ENCODE measurements at regions of chr18 and their contacts with region 1.

Region 1: GRCh38 chr18:3447895-3448837 is 1.8 kb upstream of the TGIF1 start:
- DNase-seq: peak; percentile 96
- ATAC-seq: peak; percentile 76
- H3K4me3 ChIP-seq: peak overlapping the region; percentile 85
- H3K27ac ChIP-seq: peak overlapping the region; percentile 91
- H3K4me1 ChIP-seq: peaks cover 2% of the 10 kb centered on the region
- H3K27me3 ChIP-seq: no peaks in the 10 kb centered on the region
- CTCF ChIP-seq: peak; percentile 24; the same call in 1 of the 2 replicates
- POLR2A ChIP-seq: peak; percentile 95
- RAD21 ChIP-seq: peak; percentile 35; the same call in 1 of the 2 replicates

Region 2: DNA sequence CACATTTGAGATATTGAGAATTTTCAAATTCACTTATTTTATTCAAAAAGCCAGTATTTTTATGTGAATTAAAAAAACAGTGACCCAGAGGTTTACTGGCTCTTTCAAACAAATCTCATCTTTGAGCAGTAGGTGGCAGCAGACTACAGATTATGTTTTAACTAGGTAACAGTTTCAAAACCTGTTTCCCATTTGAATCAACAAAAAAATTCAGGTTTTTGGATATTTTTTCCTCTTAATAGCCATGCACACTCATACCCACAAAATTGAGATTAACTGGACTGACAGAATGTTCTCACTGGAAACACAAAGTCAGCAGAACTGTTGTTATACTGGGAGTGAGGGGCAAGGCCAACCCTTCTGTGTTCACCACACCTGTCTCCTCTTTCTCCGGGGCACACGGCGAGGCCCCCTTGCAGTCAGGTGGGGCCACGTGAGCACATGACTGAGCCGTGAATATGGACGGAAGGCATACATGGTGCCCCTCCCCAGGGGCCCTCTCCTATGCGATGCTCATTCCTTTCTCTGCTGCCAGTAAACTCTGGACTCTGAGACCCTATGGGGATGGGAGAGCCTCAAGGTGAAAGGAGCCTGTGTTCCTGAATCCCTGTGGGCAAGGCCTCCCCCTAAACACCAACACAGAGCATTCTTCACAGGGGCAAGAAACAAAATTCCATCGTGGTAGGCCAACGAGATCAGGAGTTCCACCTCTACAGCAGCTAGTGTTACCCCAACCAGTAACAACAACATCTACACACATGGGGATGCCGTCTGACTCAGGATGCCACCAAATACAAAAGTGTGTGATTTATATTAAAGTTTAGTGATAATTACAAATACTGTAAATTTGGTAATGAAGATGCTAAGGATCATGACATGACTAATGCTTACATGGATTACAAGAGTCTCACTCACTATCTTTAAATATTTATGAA is 515.7 kb before region 1 on chr18:
- CTCF ChIA-PET with region 1: no interaction called
- POLR2A ChIA-PET with region 1: no interaction called
- dilution Hi-C with region 1: no loop called
- in situ Hi-C with region 1: no loop called
- intact Hi-C with region 1: loop called (anchors 10 kb)
- DNase-seq: peak; percentile 70
- ATAC-seq: peak; percentile 56
- H3K4me3 ChIP-seq: no peak overlapping the region
- H3K27ac ChIP-seq: peak overlapping the region; percentile 39; the same call in 1 of the 2 replicates
- H3K4me1 ChIP-seq: peaks cover 14% of the 10 kb centered on the region
- H3K27me3 ChIP-seq: no peaks in the 10 kb centered on the region
- CTCF ChIP-seq: peak; percentile 82
- POLR2A ChIP-seq: no peak
- RAD21 ChIP-seq: peak; percentile 84

Region 3: DNA sequence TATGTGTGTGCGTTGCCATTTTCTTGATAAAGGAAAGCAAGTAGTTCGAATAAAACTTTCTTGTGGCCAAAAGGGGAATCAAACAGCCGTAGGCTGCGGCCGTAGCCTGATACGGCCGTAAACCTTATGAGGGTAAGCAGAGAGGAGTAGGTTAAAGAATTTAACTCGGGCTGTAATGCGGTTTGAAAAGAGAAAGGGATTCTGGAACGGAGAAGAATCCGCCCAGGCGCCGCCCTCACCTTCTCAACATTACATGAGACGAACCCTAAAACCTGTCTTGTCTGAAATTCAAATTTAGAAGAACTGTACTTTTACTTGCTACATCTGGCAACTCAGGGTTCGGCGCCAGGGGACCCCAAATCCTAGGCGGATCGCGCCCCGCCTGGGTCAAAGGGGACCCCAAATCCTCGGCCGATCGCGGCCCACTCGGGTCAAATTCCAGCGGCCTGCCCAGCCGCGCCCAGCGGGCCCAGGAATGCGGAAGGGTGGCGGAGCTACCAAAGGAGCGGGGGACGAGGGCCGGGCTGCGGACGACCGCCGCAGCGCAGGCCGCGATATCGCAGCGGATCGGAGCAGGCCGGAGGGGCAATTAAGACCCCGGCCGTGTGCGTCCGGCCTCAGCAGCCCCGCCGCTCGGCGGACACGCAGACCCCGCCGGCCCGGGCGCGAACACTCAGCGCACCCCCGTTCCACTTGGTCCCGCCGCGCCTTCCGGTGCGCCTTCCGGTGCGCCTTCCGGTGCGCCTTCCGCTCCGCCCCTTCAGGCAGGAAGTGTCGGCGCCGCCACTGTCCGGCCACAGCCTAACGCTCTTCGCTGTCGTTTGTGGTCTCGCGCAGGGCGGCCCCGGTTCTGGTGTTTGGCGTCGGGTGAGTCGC is 186.6 kb before region 1 on chr18 and contains the start of gene MYL12B:
- CTCF ChIA-PET with region 1: no interaction called
- POLR2A ChIA-PET with region 1: interaction called, 11 read pairs
- dilution Hi-C with region 1: no loop called
- in situ Hi-C with region 1: no loop called
- intact Hi-C with region 1: loop called (anchors 5 kb)
- DNase-seq: peak; percentile 68
- ATAC-seq: peak; percentile 80
- H3K4me3 ChIP-seq: peak within 1 kb of the TSS; percentile 87
- H3K27ac ChIP-seq: peak within 1 kb of the TSS; percentile 99
- H3K4me1 ChIP-seq: peaks cover 15% of the 10 kb centered on the region
- H3K27me3 ChIP-seq: no peaks in the 10 kb centered on the region
- CTCF ChIP-seq: no peak
- POLR2A ChIP-seq: peak; percentile 86
- RAD21 ChIP-seq: no peak
- total RNA-seq, gene MYL12B: 593 and 692 TPM in 2 replicates

Region 4: DNA sequence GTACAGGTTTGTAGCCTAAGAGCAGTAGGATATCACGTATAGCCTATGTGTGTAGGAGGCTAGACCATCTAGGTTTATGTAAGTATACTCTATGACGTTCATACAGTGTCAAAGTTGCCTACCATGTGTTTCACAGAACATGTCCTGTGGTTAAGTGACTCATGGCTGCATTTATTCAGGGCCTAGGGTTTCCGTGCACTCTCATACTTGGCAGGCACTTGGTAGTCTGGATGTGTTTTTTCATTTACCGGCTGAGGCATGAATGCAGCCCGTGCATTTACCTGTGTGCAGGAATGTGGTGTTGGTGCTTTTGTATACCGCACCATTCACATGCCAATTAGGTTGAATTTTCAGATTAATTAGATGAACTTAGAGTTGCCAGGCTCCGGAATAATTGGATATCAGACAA is 142.8 kb before region 1 on chr18:
- CTCF ChIA-PET with region 1: no interaction called
- POLR2A ChIA-PET with region 1: no interaction called
- dilution Hi-C with region 1: no loop called
- in situ Hi-C with region 1: no loop called
- intact Hi-C with region 1: loop called (anchors 1 kb)
- DNase-seq: peak; percentile 100
- ATAC-seq: peak; percentile 98
- H3K4me3 ChIP-seq: no peak overlapping the region
- H3K27ac ChIP-seq: no peak overlapping the region
- H3K4me1 ChIP-seq: peaks cover 6% of the 10 kb centered on the region
- H3K27me3 ChIP-seq: no peaks in the 10 kb centered on the region
- CTCF ChIP-seq: no peak
- POLR2A ChIP-seq: no peak
- RAD21 ChIP-seq: 0 out of 2 replicates have a peak, but pooled peaks have one; percentile 19

Region 5: GRCh38 chr18:3498698-3499471 is 50.7 kb after region 1 on chr18:
- CTCF ChIA-PET with region 1: no interaction called
- POLR2A ChIA-PET with region 1: no interaction called
- dilution Hi-C with region 1: no loop called
- in situ Hi-C with region 1: no loop called
- intact Hi-C with region 1: no loop called
- DNase-seq: peak; percentile 39
- ATAC-seq: peak; percentile 89
- H3K4me3 ChIP-seq: peak overlapping the region; percentile 38
- H3K27ac ChIP-seq: no peak overlapping the region
- H3K4me1 ChIP-seq: no peaks in the 10 kb centered on the region; the same call in 1 of the 2 replicates
- H3K27me3 ChIP-seq: no peaks in the 10 kb centered on the region
- CTCF ChIP-seq: no peak
- POLR2A ChIP-seq: no peak
- RAD21 ChIP-seq: no peak

Region 6: GRCh38 chr18:3623769-3624545 is 175.8 kb after region 1 on chr18:
- CTCF ChIA-PET with region 1: no interaction called
- POLR2A ChIA-PET with region 1: interaction called, 5 read pairs
- dilution Hi-C with region 1: no loop called
- in situ Hi-C with region 1: no loop called
- intact Hi-C with region 1: loop called (anchors 1 kb)
- DNase-seq: peak; percentile 98
- ATAC-seq: peak; percentile 62
- H3K4me3 ChIP-seq: peak overlapping the region; percentile 13; the same call in 1 of the 2 replicates
- H3K27ac ChIP-seq: peak overlapping the region; percentile 96
- H3K4me1 ChIP-seq: peaks cover 25% of the 10 kb centered on the region
- H3K27me3 ChIP-seq: no peaks in the 10 kb centered on the region
- CTCF ChIP-seq: no peak
- POLR2A ChIP-seq: peak; percentile 78
- RAD21 ChIP-seq: peak; percentile 17; the same call in 1 of the 2 replicates

Region 7: DNA sequence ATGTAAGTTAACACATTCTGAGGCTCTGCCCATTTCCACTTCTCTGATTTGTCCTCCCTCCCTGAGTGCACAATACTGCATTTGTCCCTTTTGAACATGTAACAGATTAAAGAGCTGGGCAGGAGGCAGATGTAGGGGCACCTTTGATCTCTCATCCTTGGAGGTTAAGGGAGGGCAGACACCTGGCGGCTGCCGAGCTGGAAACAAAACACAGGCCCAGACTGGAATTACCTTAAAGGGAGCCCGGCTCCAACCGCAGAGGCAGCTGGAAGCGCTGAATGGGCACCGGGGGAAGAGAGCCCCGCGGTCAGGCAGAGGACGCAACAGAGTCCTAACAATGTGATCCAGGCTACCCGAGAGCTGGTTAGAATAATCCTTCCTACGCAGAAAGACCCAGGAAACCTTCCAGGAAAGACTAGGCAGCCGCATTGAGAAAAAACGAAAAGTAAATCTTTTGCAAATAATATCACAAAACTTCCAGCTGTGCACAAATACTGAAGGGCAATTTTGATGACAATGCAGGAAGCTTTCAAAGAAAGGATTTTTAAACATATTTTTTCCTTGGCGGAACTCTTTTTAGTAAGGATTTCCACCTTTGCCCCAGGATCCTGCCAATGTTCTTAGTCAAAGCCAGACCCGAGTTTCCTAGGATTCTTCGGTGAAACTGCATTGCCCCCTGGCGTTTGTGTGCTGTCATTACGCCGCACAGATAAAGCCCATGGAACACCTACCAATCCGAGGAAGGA is 217.8 kb after region 1 on chr18:
- CTCF ChIA-PET with region 1: interaction called, 3 read pairs
- POLR2A ChIA-PET with region 1: interaction called, 6 read pairs
- dilution Hi-C with region 1: no loop called
- in situ Hi-C with region 1: loop called (anchors 5 kb)
- intact Hi-C with region 1: loop called (anchors 1 kb)
- DNase-seq: peak; percentile 91
- ATAC-seq: peak; percentile 96
- H3K4me3 ChIP-seq: no peak overlapping the region
- H3K27ac ChIP-seq: peak overlapping the region; percentile 72
- H3K4me1 ChIP-seq: peaks cover 7% of the 10 kb centered on the region
- H3K27me3 ChIP-seq: no peaks in the 10 kb centered on the region
- CTCF ChIP-seq: peak; percentile 94
- POLR2A ChIP-seq: no peak
- RAD21 ChIP-seq: peak; percentile 99

Region 8: DNA sequence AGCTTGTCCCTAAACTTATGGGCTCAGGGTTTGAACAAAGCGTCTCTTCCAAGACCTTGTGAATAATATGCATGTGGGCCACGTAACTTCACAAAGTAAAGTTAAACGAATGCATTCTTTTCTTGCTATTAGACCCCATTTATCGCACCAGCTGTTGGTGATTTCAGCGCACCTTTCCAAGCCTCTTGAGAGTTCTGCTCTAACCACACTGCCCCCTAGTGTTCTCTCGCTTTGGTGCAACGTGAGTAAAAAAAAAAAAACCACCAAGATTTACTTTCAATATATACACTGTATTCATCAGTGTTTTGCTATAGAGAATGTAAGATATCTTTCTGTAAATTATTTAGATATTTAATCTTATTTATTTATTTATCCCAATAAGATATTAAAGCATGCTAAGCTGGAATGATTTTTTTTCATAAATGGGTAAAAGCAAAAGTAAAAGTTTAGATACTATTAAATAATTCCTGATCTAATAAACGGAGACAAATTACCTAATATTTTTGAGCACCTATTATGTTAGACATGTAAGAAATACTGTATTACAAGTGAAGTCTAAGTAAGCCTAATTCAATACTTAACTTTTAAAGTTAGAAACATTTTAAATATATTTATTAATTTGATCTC is 547.4 kb after region 1 on chr18:
- CTCF ChIA-PET with region 1: interaction called, 3 read pairs
- POLR2A ChIA-PET with region 1: no interaction called
- dilution Hi-C with region 1: no loop called
- in situ Hi-C with region 1: no loop called
- intact Hi-C with region 1: loop called (anchors 5 kb)
- DNase-seq: peak; percentile 82
- ATAC-seq: peak; percentile 72
- H3K4me3 ChIP-seq: no peak overlapping the region
- H3K27ac ChIP-seq: no peak overlapping the region
- H3K4me1 ChIP-seq: no peaks in the 10 kb centered on the region
- H3K27me3 ChIP-seq: no peaks in the 10 kb centered on the region
- CTCF ChIP-seq: peak; percentile 80
- POLR2A ChIP-seq: no peak
- RAD21 ChIP-seq: peak; percentile 76

Measured in IMR-90 (cell line).